Activated naive CD8-positive, alpha-beta T cell treated with anti-CD3 and anti-CD28 coated beads, Interleukin-2, amount 10 ng/mL, durations not matched to agents 7 days and 5 days (primary cell): ENCODE measurements at regions of chr17 and their contacts with region 1.

Region 1: DNA sequence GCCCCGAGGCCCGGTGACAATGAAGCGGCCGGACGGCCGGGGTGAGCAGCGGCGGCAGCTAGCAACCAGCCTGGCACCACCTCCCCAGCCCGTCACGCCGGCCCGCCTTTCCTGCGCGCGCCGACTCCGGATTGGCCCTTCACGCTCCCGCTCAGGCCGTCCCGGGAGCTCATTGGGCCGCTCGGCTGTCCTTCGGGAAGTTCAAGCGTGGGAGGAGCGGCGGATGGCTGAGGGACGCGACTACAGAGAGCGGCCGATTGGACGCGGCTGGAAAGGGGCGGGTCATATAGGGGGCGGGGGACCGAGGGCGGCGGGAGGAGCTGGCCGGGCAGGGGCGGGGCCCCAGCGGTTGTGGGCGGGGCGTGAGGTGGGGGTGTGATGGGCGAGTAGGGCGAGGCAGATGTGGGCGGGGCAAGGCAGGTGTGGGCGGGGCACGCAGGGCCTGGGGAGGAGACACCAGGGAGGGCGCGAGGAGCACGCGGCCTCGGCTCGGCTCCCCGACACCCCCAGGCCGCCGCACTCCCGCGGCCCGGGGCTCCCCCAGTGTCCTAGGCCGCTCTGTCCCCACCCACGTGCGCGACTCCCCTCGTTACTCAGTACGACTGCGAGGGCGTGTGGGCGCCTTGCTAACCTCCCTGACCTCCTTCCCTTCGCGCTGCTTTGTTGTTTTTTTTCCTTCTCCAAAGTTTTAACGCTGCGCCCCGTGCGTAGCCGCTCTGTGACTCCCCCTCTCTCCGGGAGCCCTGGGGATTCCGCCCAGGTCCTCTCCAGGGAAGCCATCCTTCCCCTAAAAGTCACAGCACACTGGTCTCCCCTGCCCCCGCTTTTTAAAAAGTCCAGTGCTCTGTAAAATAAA is at the start of gene CEP131:
- DNase-seq: peak; percentile 100
- ATAC-seq: peak; percentile 100
- H3K4me3 Mint-ChIP-seq: peak within 1 kb of the TSS; percentile 75
- H3K27ac Mint-ChIP-seq: peak within 1 kb of the TSS; percentile 50
- H3K4me1 Mint-ChIP-seq: peaks cover 15% of the 10 kb centered on the region
- H3K27me3 Mint-ChIP-seq: peaks cover 3% of the 10 kb centered on the region
- total RNA-seq, gene CEP131: 18.4 to 20.7 TPM

Region 2: DNA sequence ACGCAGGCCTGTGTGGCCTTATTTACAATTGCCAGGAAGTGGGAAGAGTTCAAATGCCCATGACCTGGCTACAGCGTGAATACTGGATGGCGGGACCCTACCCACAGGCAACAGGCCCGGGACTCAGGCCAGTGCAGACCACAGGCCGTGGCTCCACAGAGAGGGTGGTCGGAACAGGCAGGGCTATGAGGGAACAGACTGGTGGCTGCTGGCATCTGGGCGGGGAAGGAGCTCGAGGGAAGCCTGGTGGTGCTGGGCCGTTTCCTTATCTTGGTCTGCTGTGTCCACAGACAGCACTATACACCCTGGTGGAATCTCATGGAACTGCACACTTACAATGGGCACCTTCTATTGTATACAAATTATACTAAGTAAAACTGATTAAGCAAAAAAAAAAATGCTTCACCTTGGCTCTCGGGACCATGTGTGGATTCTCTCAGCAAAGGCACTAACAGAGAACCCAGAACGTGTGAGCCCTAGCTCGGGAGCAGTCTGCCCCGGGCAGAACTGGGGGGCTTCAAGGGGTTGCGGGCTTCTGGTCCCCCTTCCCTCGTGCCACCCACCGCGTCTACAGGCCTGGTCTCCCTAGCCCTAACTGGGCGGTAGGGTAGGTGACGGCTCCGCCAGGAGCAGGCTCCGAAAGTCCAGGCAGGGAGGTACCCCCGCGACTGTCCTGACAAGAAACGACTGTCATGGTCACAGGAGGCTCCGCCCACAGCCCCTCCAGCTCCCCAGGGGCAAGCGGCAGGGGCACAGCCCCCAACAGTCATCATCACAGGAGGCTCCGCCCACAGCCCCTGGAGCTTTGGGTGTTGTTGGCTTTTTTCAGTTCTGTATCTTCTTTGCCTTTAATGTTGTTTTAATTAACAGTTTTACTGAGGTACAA is 22.2 kb before region 1 on chr17:
- POLR2A ChIA-PET with region 1: no interaction called
- DNase-seq: no peak
- ATAC-seq: peak; percentile 74
- H3K4me3 Mint-ChIP-seq: no peak overlapping the region
- H3K27ac Mint-ChIP-seq: no peak overlapping the region
- H3K4me1 Mint-ChIP-seq: no peaks in the 10 kb centered on the region
- H3K27me3 Mint-ChIP-seq: no peaks in the 10 kb centered on the region

Region 3: GRCh38 chr17:81238817-81239600 is 15.9 kb after region 1 on chr17 and contains the starts of genes NDUFAF8 and TEPSIN:
- POLR2A ChIA-PET with region 1: interaction called, 26 read pairs
- DNase-seq: peak; percentile 93
- ATAC-seq: peak; percentile 98
- H3K4me3 Mint-ChIP-seq: peak within 1 kb of the TSS; percentile 93
- H3K27ac Mint-ChIP-seq: peak within 1 kb of the TSS; percentile 91
- H3K4me1 Mint-ChIP-seq: peaks cover 31% of the 10 kb centered on the region
- H3K27me3 Mint-ChIP-seq: no peaks in the 10 kb centered on the region
- total RNA-seq, gene NDUFAF8: 33.0 to 44.6 TPM
- total RNA-seq, gene TEPSIN: 71.1 to 78.8 TPM